ENCODE measurements at regions of chr5 and their contacts with region 1.

Region 1: GRCh38 chr5:88680253-88681132 is 202.5 kb downstream of the MEF2C start:
- DNase-seq: peak; percentile 76 to 93
- H3K4me3 ChIP-seq: peak overlapping the region; percentile 48
- H3K4me1 ChIP-seq: peaks cover 10% of the 10 kb centered on the region
- H3K27me3 ChIP-seq: no peaks in the 10 kb centered on the region

Region 2: DNA sequence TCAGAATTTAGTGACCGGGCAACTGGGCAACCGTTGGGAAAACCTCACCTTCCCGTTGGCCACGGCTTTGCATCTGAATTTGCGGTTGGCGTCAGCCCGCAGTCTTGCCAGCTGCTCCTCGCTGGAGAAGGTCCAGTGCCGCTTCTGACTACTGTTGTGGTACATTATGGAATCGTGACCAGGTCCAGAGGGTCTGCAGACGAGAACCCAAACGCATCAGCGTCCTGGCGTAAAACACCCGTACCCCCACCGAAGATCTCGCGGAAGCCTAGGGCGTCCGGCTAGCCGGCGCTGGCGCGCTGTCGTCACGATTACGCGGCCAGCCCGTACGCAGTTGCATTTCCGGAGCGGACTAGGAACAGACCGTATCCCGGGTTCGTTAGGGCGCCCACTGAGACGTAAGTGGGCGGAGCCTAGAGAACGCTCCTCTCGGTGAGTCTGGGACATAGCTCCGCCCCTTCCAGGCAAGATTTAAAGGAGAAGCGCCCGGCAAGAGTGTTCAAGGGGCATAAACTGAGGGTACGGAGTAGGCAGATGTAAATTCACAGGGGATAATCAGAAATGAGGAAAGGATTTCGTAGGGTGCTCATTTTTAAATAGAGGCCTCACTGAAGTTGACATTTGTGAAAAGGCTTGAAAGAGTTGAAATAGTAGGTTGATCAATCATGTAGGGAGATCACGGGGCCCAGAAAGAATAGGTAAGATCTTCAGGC is 1267.7 kb before region 1 on chr5 and contains the start of gene CCNH:
- in situ Hi-C with region 1: loop called (anchors 10 kb)
- DNase-seq: peak; percentile 94 to 98
- H3K4me3 ChIP-seq: peak within 1 kb of the TSS; percentile 69
- H3K4me1 ChIP-seq: peaks cover 19% of the 10 kb centered on the region
- H3K27me3 ChIP-seq: no peaks in the 10 kb centered on the region

Region 3: DNA sequence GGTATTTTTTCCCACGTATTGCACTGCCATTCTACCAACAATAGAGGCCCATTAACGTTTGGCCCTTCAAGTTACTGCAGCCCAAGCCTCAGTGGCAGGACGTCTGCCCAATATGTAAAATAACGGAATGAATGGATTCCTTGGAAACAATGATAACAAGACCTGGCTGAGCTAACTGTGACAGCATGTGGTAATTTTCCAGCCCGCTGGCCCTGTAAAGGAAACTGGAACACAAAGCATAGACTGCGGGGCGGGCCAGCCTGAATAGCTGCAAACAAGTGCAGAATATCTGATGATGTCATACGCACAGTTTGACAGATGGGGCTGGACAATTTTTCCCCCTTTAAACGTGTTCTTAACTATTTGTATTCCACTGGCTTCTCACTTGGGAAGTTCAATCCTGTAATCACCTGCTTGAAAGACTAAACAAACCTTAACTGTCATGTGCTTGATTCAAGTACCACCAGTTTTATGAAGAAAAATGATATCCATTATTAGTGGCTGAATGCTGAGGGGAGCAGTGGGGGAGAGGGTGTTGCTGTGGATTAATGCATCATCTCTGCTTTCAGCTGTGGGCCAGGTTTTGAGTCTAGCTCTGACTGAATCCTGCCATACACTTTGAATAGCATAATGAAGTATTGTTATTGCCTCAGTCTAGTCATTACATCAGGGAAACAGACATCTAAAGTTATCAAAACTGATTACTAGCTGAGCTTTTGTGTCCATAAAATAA is 735.8 kb before region 1 on chr5:
- in situ Hi-C with region 1: loop called (anchors 10 kb)
- DNase-seq: peak; percentile 91 to 96
- H3K4me3 ChIP-seq: no peak overlapping the region
- H3K4me1 ChIP-seq: peaks cover 32% of the 10 kb centered on the region
- H3K27me3 ChIP-seq: no peaks in the 10 kb centered on the region

Region 4: GRCh38 chr5:88268385-88269184 is 411.9 kb before region 1 on chr5 and contains the start of gene TMEM161B:
- in situ Hi-C with region 1: loop called (anchors 10 kb)
- DNase-seq: peak; percentile 86 to 96
- H3K4me3 ChIP-seq: peak within 1 kb of the TSS; percentile 80
- H3K4me1 ChIP-seq: peaks cover 18% of the 10 kb centered on the region
- H3K27me3 ChIP-seq: no peaks in the 10 kb centered on the region

Region 5: DNA sequence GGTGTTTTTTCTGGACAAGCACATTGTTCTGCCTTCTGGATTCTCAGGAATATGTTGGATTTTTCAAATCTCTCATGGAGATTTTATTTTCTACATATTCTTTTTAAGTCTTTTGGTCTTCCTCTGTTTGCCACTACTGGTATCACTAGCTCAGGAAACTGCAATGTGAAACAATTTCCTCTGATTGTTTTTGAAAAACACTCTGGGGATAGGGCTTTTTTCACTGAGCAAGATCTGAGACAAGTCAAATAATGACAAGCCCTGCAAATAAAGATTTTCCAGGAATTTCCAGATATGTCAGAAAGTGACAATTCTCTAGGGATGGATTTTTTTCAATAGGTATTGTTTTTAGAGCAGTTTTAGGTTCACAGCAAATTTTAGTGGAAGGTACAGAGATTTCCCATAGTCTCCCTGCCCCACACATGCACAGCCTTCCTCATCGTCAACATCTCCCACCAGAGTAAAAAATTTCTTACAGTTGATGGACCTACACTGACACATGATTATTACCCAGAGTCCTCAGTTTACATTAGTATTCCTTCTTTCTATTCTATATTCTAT is 324.9 kb before region 1 on chr5:
- in situ Hi-C with region 1: no loop called
- DNase-seq: no peak
- H3K4me3 ChIP-seq: no peak overlapping the region
- H3K4me1 ChIP-seq: no peaks in the 10 kb centered on the region
- H3K27me3 ChIP-seq: no peaks in the 10 kb centered on the region

Region 6: DNA sequence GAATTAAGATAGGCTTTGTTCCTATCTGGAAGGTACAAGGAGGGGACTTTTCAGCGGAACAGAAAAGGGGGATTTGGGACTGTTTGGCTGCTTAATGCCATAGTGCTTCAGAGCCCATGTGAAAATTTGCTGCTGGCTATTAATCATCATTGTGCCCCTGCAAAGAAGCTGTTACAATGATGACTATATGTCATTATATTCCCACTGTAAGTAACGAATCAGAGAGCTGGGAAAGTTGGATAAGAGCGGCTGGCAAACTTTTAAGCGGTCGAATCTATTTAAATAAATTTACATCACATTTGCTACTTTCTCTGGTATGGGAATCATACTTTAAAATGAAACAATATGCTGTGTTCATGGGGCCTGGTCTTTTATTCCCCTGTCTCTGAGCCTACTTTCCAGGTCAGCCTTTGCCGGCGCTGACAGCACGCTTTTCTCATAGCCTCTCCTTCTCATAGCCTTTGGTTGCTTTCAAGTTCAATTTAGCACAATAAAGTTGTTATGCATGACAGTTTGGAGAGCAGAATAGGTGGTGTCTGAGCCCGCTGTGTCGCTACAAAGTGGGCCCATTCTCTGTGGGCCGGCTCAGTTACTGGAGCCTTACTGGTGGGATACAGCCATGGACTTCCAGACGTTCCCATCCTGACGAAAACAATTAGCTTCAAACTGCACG is 140.7 kb before region 1 on chr5:
- in situ Hi-C with region 1: loop called (anchors 10 kb)
- DNase-seq: peak; percentile 63 to 77
- H3K4me3 ChIP-seq: no peak overlapping the region
- H3K4me1 ChIP-seq: peaks cover 34% of the 10 kb centered on the region
- H3K27me3 ChIP-seq: no peaks in the 10 kb centered on the region

Region 7: DNA sequence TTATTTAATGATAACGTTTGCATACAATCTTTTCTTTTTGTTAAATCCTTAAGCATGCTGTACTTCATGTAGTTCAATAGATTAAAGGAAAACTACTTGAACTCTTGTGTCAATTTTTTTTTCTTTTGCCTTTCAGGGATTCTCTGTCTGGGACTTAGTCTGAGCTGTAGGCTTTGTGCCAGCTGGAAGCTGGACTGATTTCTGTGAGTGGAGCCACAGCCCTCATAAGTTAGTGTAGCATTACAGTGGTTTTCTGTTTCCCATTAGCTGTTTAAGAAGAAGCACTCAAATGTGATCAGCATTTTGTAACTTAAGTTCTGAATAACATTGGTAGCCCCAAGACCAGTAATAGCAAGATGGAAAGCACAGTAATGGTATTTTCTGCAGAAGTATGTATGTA is 533.1 kb after region 1 on chr5:
- in situ Hi-C with region 1: no loop called
- DNase-seq: no peak
- H3K4me3 ChIP-seq: no peak overlapping the region
- H3K4me1 ChIP-seq: no peaks in the 10 kb centered on the region
- H3K27me3 ChIP-seq: no peaks in the 10 kb centered on the region

Measured in HAP-1 (cell line).